Panc1 (cell line): ENCODE measurements at regions of chr1 and their contacts with region 1.

Region 1: GRCh38 chr1:26035959-26036755 is 9.8 kb downstream of the SLC30A2 start:
- DNase-seq: peak; percentile 28
- ATAC-seq: peak; percentile 91
- H3K4me3 ChIP-seq: peak overlapping the region; percentile 93 to 96
- H3K27ac ChIP-seq: peak overlapping the region; percentile 71
- H3K4me1 ChIP-seq: peaks cover 14% of the 10 kb centered on the region
- H3K27me3 ChIP-seq: no peaks in the 10 kb centered on the region
- CTCF ChIP-seq: peak; percentile 98

Region 2: GRCh38 chr1:26059906-26060305 is 23.7 kb after region 1 on chr1:
- CTCF ChIA-PET with region 1: no interaction called
- POLR2A ChIA-PET with region 1: no interaction called
- in situ Hi-C with region 1: no loop called
- intact Hi-C with region 1: no loop called
- DNase-seq: no peak
- ATAC-seq: no peak
- H3K4me3 ChIP-seq: no peak overlapping the region
- H3K27ac ChIP-seq: no peak overlapping the region
- H3K4me1 ChIP-seq: no peaks in the 10 kb centered on the region; the same call in 1 of the 2 replicates
- H3K27me3 ChIP-seq: no peaks in the 10 kb centered on the region
- CTCF ChIP-seq: no peak

Region 3: GRCh38 chr1:26094677-26095383 is 58.7 kb after region 1 on chr1:
- CTCF ChIA-PET with region 1: no interaction called
- POLR2A ChIA-PET with region 1: no interaction called
- in situ Hi-C with region 1: no loop called
- intact Hi-C with region 1: loop called (anchors 10 kb)
- DNase-seq: no peak
- ATAC-seq: peak; percentile 56; the same call in 1 of the 2 replicates
- H3K4me3 ChIP-seq: no peak overlapping the region
- H3K27ac ChIP-seq: no peak overlapping the region
- H3K4me1 ChIP-seq: peaks cover 3% of the 10 kb centered on the region; the same call in 1 of the 2 replicates
- H3K27me3 ChIP-seq: 0 out of 2 replicates have a peak, but pooled peaks cover 4% of the 10 kb centered on the region
- CTCF ChIP-seq: no peak

Region 4: GRCh38 chr1:26111530-26112406 is 75.6 kb after region 1 on chr1 and contains the start of gene PDIK1L:
- CTCF ChIA-PET with region 1: no interaction called
- POLR2A ChIA-PET with region 1: no interaction called
- in situ Hi-C with region 1: no loop called
- intact Hi-C with region 1: loop called (anchors 5 kb)
- DNase-seq: peak; percentile 68
- ATAC-seq: peak; percentile 91
- H3K4me3 ChIP-seq: peak within 1 kb of the TSS; percentile 85 to 94
- H3K27ac ChIP-seq: peak within 1 kb of the TSS; percentile 83
- H3K4me1 ChIP-seq: peaks cover 17% of the 10 kb centered on the region
- H3K27me3 ChIP-seq: no peaks in the 10 kb centered on the region
- CTCF ChIP-seq: no peak
- total RNA-seq, gene PDIK1L: 8.0 TPM

Region 5: GRCh38 chr1:26145041-26145959 is 109.1 kb after region 1 on chr1:
- CTCF ChIA-PET with region 1: interaction called, 17 read pairs
- POLR2A ChIA-PET with region 1: no interaction called
- in situ Hi-C with region 1: no loop called
- intact Hi-C with region 1: loop called (anchors 5 kb)
- DNase-seq: peak; percentile 69
- ATAC-seq: peak; percentile 98
- H3K4me3 ChIP-seq: peak overlapping the region in 1 of 2 experiments; percentile 15; a peak in 1 of 4 replicates
- H3K27ac ChIP-seq: no peak overlapping the region
- H3K4me1 ChIP-seq: 0 out of 2 replicates have a peak, but pooled peaks cover 4% of the 10 kb centered on the region
- H3K27me3 ChIP-seq: no peaks in the 10 kb centered on the region
- CTCF ChIP-seq: peak; percentile 87